ENCODE measurements at regions of chr5 and their contacts with region 1.

Region 1: GRCh38 chr5:179858586-179859427 is at the start of gene MRNIP:
- DNase-seq: peak; percentile 97 to 99 (median 98)
- ATAC-seq: peak; percentile 99 to 100 (median 99)
- H3K4me3 ChIP-seq: peak within 1 kb of the TSS; percentile 70 to 100 (median 87)
- H3K27ac ChIP-seq: peak within 1 kb of the TSS; percentile 84 to 97 (median 94)
- H3K4me1 ChIP-seq: peaks cover 0 to 27% (median 16%) of the 10 kb centered on the region in 12 donors
- H3K27me3 ChIP-seq: no peaks in the 10 kb centered on the region
- CTCF ChIP-seq: peak in 7 of 12 donors; percentile 7 to 52 (median 37)
- POLR2A ChIP-seq: peak in 1 of 2 donors; percentile 81
- total RNA-seq, gene MRNIP: 8.5 to 14.4 (median 12.3) TPM

Region 2: DNA sequence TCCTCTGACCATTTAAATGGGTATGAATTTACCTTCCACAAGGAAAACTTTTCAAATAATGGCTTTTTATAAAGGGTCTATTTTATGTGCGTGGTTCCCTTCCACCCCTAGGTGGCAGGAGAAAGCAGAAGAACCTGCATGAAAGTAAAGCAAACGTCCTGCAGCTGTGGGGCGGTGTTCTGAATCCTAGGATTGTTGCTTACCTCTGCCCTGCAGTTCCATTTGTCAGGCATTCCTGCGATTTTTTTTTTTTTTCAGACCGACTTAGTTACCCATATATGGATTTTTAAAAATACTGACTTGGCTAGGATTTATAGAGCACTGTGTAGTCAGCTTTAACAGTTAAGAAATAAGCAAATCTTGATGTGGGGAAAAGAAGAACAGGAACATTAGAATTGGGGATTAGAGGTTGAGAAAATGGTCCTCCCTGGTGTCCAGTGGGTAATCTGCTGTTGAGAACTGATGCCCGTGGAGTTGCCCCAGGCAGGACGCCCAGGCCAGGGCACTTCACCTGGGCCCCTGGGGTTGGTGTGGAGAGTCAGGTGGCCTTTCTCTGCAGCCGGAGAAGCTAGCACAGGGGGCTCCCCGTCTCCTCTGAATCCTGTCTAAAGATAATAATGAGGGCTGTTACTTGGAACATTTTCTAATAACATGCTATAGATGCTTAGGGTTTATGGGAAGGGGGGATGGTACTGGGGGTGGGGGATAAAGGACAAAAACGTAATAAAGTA is 95.4 kb before region 1 on chr5:
- intact Hi-C with region 1: loop called in 1 of 10 experiments (anchors 10 kb)
- DNase-seq: peak in 3 of 5 donors; percentile 67 to 73 (median 69)
- ATAC-seq: peak in 3 of 4 donors; percentile 47 to 79 (median 66)
- H3K4me3 ChIP-seq: no peak overlapping the region
- H3K27ac ChIP-seq: peak overlapping the region in 3 of 12 donors; percentile 35 to 51 (median 35)
- H3K4me1 ChIP-seq: peaks cover 0 to 96% (median 68%) of the 10 kb centered on the region in 12 donors
- H3K27me3 ChIP-seq: no peaks in the 10 kb centered on the region
- CTCF ChIP-seq: peak; percentile 79 to 96 (median 89)
- POLR2A ChIP-seq: no peak

Region 3: GRCh38 chr5:179806250-179807222 is 52.3 kb before region 1 on chr5 and contains the start of gene MGAT4B:
- intact Hi-C with region 1: loop called in 1 of 10 experiments (anchors 10 kb)
- DNase-seq: peak; percentile 78 to 89 (median 86)
- ATAC-seq: peak; percentile 69 to 90 (median 88)
- H3K4me3 ChIP-seq: peak within 1 kb of the TSS; percentile 73 to 100 (median 96)
- H3K27ac ChIP-seq: peak within 1 kb of the TSS; percentile 89 to 98 (median 96)
- H3K4me1 ChIP-seq: peaks cover 0 to 50% (median 39%) of the 10 kb centered on the region in 12 donors
- H3K27me3 ChIP-seq: no peaks in the 10 kb centered on the region
- CTCF ChIP-seq: no peak
- POLR2A ChIP-seq: peak in 1 of 2 donors; percentile 47
- total RNA-seq, gene MGAT4B: 84.2 to 209 (median 112) TPM

Region 4: GRCh38 chr5:179878222-179879009 is 19.6 kb after region 1 on chr5:
- intact Hi-C with region 1: no loop called
- DNase-seq: peak in 2 of 5 donors; percentile 18 to 23
- ATAC-seq: no peak
- H3K4me3 ChIP-seq: no peak overlapping the region
- H3K27ac ChIP-seq: no peak overlapping the region
- H3K4me1 ChIP-seq: no peaks in the 10 kb centered on the region
- H3K27me3 ChIP-seq: no peaks in the 10 kb centered on the region
- CTCF ChIP-seq: no peak
- POLR2A ChIP-seq: no peak